ENCODE measurements at regions of chr6 and their contacts with region 1.

Region 1: DNA sequence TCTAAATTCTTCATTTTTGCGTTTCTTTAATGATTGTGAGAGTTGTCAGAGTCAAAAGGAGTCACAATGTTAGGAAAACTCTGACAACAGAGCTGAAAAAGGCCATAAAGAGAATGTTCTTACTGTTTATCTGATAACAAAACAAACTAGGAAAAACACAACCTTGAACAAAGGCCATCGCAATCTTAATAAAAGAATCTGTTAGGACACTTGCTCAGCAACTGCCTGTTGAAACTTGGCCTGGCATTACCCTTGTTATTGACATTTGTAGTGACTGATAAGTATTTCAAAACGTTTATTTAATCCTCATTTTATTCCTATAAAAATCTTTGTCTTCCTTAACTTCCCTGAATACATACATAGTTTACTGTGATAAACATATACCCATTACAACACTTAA is 15.7 kb downstream of the GSTA1 start:
- DNase-seq: no peak
- H3K4me3 ChIP-seq: no peak overlapping the region
- H3K27ac ChIP-seq: no peak overlapping the region
- H3K4me1 ChIP-seq: no peaks in the 10 kb centered on the region
- H3K27me3 ChIP-seq: no peaks in the 10 kb centered on the region
- CTCF ChIP-seq: no peak

Region 2: GRCh38 chr6:52670502-52671409 is 117.2 kb before region 1 on chr6 and contains the start of gene TMEM14A:
- intact Hi-C with region 1: no loop called
- DNase-seq: peak; percentile 53 to 95
- H3K4me3 ChIP-seq: peak within 1 kb of the TSS; percentile 82 to 86
- H3K27ac ChIP-seq: peak within 1 kb of the TSS; percentile 35 to 56
- H3K4me1 ChIP-seq: peaks cover 6 to 10% of the 10 kb centered on the region in 2 donors
- H3K27me3 ChIP-seq: no peaks in the 10 kb centered on the region
- CTCF ChIP-seq: peak in 1 of 3 experiments; percentile 15
- total RNA-seq, gene TMEM14A: 11.9 TPM

Region 3: DNA sequence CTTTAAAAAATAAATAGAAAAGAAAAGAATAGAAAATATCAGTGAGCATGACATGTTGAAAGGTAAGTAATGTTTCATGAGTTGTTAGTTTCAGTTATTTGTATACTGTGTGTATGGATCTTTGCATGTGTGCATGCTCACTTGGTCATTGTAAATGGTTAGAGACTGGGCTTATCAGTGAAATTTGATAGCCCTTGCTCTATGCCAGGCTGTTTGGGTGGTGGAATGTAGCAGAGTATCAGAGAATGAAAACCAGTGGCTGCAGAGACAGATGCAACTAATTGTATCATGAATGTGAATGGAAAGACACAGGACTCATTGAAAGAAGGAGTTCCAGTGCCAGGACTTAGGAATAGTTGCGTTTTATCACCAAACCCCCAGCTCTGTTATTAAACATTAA is 28.8 kb before region 1 on chr6:
- intact Hi-C with region 1: no loop called
- DNase-seq: no peak
- H3K4me3 ChIP-seq: no peak overlapping the region
- H3K27ac ChIP-seq: no peak overlapping the region
- H3K4me1 ChIP-seq: no peaks in the 10 kb centered on the region
- H3K27me3 ChIP-seq: no peaks in the 10 kb centered on the region
- CTCF ChIP-seq: no peak

Region 4: DNA sequence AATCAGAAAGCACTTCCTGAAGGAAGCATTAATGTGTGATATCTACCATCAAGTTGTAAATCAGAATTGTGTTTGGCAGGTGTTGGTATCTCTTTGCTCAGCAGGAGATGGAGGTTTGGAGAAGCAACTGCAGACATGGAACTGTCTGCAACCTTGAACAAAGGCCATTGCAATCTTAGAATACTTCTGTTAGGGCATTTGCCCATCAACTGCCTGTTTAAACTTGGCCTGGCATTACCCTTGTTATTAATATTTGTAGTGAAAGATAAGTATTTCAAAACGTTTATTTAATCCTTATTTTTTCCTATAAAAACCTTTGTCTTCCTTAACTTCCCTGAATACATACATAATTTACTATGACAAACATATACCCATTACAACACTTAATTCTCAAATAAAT is 38.6 kb after region 1 on chr6:
- intact Hi-C with region 1: loop called (anchors 2 kb)
- DNase-seq: no peak
- H3K4me3 ChIP-seq: no peak overlapping the region
- H3K27ac ChIP-seq: no peak overlapping the region
- H3K4me1 ChIP-seq: no peaks in the 10 kb centered on the region
- H3K27me3 ChIP-seq: no peaks in the 10 kb centered on the region
- CTCF ChIP-seq: no peak